ENCODE measurements at regions of chr5 and their contacts with region 1.

Region 1: DNA sequence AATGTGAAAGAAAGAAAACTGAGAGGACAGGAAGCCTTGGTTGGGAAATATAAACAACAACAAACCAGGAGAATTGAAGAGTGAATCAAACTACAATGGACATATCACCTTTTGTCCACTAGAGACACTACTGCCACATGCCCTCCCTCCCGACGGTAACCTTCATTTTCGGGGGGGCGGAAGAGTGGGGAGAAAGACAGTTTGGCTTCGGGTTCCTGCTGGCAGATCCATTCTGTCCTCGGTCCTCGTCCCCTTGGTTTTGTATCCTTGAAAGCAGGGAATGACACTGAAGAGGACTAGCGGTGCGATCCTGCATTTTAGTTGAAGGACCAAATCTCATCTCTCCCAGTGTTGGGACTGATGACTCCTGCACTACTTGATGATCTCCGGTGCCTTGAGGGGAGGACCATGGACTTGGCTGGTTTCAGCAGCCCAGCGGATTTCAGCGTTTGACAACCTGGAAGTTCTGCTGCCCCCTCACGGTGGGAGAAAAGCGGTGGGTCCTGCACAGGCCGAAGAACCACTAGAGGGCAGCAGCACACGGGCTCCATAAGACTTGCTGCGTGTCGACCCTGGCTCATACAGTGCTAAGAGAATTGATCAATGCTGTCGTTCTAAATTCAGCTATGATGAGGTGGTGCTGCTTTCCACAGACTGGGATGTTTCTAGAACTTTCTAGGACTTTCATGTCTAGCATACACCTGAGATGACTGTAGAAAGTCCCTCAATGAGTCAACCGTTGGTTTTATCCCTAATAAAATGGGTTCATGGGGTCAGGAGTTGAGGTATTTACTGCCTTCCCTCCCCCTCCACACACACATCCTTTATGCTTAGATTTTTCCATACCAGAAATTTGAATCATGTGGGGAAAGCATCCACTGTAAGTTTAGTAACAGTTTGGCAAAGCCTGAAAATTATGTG is 15.1 kb upstream of the ZNF131 start:
- DNase-seq: peak; percentile 90
- ATAC-seq: peak; percentile 97
- H3K4me3 ChIP-seq: peak overlapping the region; percentile 45 to 66 (median 45)
- H3K27ac ChIP-seq: peak overlapping the region; percentile 15
- H3K4me1 ChIP-seq: peaks cover 15% of the 10 kb centered on the region
- H3K27me3 ChIP-seq: no peaks in the 10 kb centered on the region
- CTCF ChIP-seq: peak; percentile 99
- EP300 ChIP-seq: no peak
- POLR2A ChIP-seq: no peak
- RAD21 ChIP-seq: peak; percentile 93

Region 2: DNA sequence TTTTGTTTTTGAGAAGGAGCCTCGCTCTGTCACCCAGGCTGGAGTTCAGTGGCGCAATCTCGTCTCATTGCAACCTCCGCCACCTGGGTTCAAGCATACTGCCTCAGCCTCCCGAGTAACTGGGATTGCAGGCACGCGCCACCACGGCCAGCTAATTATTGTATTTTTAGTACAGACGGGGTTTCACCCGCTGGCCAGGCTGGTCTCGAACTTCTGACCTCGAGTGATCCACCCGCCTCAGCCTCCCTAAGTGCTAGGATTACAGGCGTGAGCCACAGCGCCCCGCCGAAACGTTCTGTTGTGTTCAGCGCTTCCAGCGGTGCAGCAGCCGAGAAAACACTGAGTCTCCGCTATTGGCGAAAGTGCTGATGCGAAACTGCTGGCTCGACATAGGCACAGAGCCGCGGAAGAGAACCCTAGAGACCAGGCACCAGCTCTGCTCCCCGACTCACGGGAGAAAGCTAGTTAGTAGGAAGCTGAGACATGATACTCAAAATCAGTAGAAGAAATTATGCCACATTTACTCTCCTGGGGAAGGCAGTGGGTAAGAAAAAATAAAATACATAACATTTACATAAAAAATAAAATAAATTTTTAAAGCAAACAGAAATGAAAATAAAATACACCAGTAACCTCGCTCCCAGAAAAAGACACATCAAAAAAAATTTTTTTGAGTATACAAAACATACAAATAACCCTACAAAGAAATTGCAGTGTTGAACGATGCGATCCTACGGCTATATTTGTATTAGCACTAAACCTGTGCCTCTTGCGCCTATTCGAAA is 97.1 kb before region 1 on chr5:
- CTCF ChIA-PET with region 1: interaction called, 14 read pairs
- POLR2A ChIA-PET with region 1: no interaction called
- in situ Hi-C with region 1: no loop called
- intact Hi-C with region 1: loop called (anchors 1 kb)
- DNase-seq: peak; percentile 89
- ATAC-seq: peak; percentile 71
- H3K4me3 ChIP-seq: peak overlapping the region; percentile 73 to 94 (median 78)
- H3K27ac ChIP-seq: peak overlapping the region; percentile 84
- H3K4me1 ChIP-seq: peaks cover 12% of the 10 kb centered on the region
- H3K27me3 ChIP-seq: no peaks in the 10 kb centered on the region; a peak in 1 of 5 replicates
- CTCF ChIP-seq: peak; percentile 76
- EP300 ChIP-seq: peak in 1 of 2 experiments; percentile 53; a peak in 1 of 4 replicates
- POLR2A ChIP-seq: peak; percentile 45 to 60; a peak in 3 of 4 replicates
- RAD21 ChIP-seq: peak; percentile 14; the same call in 1 of the 2 replicates

Region 3: GRCh38 chr5:43066799-43067741 is 38.6 kb before region 1 on chr5:
- CTCF ChIA-PET with region 1: interaction called, 17 read pairs
- POLR2A ChIA-PET with region 1: interaction called, 3 read pairs
- in situ Hi-C with region 1: no loop called
- intact Hi-C with region 1: loop called (anchors 2 kb)
- DNase-seq: peak; percentile 87
- ATAC-seq: peak; percentile 83
- H3K4me3 ChIP-seq: peak overlapping the region; percentile 82 to 92 (median 83)
- H3K27ac ChIP-seq: peak overlapping the region; percentile 98
- H3K4me1 ChIP-seq: peaks cover 35% of the 10 kb centered on the region
- H3K27me3 ChIP-seq: no peaks in the 10 kb centered on the region; a peak in 1 of 5 replicates
- CTCF ChIP-seq: peak; percentile 21; the same call in 1 of the 2 replicates
- EP300 ChIP-seq: peak; percentile 38 to 84; a peak in 3 of 4 replicates
- POLR2A ChIP-seq: peak; percentile 15 to 35; a peak in 3 of 4 replicates
- RAD21 ChIP-seq: no peak

Region 4: DNA sequence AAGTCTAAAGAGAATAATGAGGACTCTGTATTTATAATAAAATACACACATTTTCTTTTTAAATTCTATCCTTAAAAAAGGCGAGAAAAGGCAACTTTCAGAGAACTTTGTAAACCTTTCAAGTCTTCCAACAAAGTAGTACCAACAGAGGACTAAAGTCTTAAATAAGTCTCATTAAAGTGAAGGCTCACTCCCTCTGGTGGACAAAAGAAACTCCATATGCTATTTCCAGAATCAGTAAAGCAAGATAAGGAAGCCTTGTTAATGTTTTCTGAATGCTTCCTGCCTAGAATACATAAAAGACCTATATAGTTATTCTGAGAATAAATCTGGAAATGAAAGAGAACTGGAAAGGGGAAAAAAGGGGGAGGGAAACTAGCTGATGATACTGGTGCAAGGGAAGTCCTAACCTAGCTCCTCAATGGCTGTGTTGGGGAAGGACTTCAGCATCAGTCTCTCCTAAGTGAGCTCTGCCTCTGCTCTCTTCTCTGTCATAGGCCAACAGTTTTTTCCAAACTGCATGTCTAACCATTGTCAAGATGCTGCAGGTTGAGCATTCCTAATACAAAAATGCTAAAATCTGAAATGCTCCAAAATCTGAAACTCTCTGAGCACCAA is 200.4 kb after region 1 on chr5:
- CTCF ChIA-PET with region 1: no interaction called
- POLR2A ChIA-PET with region 1: no interaction called
- in situ Hi-C with region 1: no loop called
- intact Hi-C with region 1: loop called (anchors 10 kb)
- DNase-seq: peak; percentile 70
- ATAC-seq: peak; percentile 63
- H3K4me3 ChIP-seq: no peak overlapping the region; a peak in 2 of 6 replicates
- H3K27ac ChIP-seq: no peak overlapping the region
- H3K4me1 ChIP-seq: peaks cover 84% of the 10 kb centered on the region
- H3K27me3 ChIP-seq: no peaks in the 10 kb centered on the region
- CTCF ChIP-seq: peak; percentile 46
- EP300 ChIP-seq: no peak
- POLR2A ChIP-seq: peak in 1 of 2 experiments; percentile 45; a peak in 1 of 4 replicates
- RAD21 ChIP-seq: no peak